Common myeloid progenitor, CD34-positive (primary cell): ENCODE measurements at regions of chr17 and their contacts with region 1.

Region 1: DNA sequence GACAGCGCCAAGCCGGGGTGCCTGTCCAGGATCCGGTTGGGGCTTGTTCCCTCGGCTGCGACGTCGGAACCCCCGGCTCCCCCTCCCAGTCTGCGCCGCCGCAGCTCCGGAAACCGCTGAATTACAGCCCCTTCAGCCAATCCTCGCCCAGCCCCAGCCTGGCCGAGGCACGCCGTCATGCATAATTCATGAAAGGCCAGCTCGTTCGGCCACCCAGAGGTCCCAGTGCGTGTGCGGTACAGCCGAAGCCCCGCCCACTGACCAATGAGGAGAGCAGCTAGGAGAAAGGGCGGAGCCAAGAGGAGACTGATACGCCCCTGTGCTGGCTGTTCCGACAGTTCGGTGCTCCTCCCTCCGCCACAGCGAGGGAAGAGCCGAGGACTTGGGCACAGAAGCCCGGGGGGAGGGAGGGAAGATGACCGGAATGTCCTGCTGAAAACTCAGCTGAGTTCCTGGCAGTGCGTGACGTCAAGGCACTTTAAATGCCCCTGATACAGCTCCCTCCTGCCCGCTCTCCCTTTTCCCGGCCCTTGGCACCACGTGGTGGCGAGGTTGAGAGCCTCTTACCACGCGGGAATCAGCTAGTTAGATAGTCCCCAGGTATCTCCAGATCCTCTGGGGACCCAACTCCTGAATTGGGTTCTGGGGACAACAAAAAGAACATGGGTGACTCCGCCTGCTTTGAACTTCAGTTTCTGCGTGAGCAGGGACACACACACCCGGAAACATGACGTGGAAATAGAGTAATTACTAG is at the start of gene STAT3:
- DNase-seq: peak; percentile 99 to 100 (median 100)
- H3K4me3 ChIP-seq: peak within 1 kb of the TSS; percentile 77 to 98 (median 93)
- H3K27ac ChIP-seq: peak within 1 kb of the TSS; percentile 98
- H3K4me1 ChIP-seq: peaks cover 19 to 38% (median 31%) of the 10 kb centered on the region in 4 experiments
- H3K27me3 ChIP-seq: no peaks in the 10 kb centered on the region

Region 2: DNA sequence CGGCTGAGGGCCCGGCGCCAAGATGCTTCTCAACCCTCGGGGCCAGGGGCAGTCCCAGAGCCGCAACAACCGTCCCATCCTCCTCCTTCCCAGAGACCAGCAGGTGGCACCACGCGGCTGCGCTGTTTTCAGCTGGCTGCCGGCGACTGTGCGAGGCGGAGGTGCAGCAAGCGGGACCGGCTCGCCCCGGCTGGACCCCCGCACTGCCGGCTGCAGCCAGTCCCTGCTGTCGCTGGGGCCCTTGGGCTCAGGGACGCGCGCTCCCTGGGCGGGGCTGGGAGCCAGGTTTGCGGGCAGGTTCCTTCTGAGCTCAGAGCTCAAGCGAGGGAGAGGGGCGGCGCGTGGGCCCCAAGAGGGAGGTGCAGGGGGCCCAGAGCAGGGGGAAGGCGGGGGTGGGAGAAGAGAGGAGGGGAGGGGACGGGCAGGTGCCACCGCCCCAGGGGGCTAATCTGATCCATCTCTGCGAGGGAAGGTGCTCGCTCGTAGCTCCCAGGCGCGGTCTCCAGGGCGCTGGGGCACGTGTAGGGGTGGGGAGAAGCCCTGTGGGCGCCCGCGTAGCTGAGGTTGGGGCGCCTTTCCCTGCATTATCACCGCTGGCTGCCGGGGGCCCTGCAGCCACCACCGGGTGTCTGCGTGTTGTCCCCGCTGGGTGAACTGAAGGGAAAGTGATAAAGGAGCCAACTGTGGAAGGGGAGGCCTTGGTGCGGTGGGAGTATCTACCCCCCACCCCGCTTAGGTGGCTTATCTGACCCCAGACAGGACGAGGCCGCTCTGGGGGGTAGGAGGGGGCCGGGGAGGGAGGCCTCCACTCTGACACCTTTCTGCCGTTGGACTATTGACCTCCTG is 76.0 kb before region 1 on chr17:
- CTCF ChIA-PET with region 1: interaction called, 13 read pairs
- POLR2A ChIA-PET with region 1: interaction called, 20 read pairs
- DNase-seq: peak; percentile 90 to 95 (median 93)
- H3K4me3 ChIP-seq: peak overlapping the region in 3 of 7 experiments; percentile 43 to 51 (median 48)
- H3K27ac ChIP-seq: peak overlapping the region; percentile 62 to 99
- H3K4me1 ChIP-seq: peaks cover 24 to 82% (median 74%) of the 10 kb centered on the region in 4 experiments
- H3K27me3 ChIP-seq: no peaks in the 10 kb centered on the region

Region 3: GRCh38 chr17:42399948-42400843 is 11.6 kb after region 1 on chr17:
- CTCF ChIA-PET with region 1: interaction called, 27 read pairs
- POLR2A ChIA-PET with region 1: interaction called, 8 read pairs
- DNase-seq: no peak
- H3K4me3 ChIP-seq: peak overlapping the region in 1 of 7 experiments; percentile 37
- H3K27ac ChIP-seq: peak overlapping the region in 1 of 2 experiments; percentile 29
- H3K4me1 ChIP-seq: peaks cover 0 to 22% (median 17%) of the 10 kb centered on the region in 4 experiments
- H3K27me3 ChIP-seq: no peaks in the 10 kb centered on the region